ENCODE measurements at regions of chr6 and their contacts with region 1.

Region 1: DNA sequence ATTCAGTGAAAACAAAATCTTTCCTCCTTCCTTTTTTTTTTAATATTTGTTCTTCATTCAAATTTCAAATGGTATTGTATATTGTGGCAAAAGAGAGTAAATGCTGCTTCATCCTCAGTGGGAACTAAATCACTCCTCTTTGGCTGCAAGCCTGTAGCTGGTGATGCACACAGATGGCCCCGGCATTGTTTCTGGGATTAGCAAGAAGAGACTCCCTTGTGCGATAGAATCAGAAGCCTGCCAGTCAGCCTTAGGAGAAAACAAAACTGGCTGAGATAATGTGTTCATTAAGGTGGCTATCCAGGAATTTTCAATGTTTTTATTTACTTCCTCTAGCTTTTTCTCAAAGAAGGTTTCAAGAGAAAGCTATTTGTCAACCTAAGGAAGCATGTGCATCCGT is 20.7 kb upstream of the ELOVL2 start:
- DNase-seq: peak in 5 of 10 donors; percentile 21 to 71 (median 64)
- H3K4me3 ChIP-seq: peak overlapping the region in 2 of 59 donors; percentile 4 to 7
- H3K27ac ChIP-seq: peak overlapping the region in 5 of 59 donors; percentile 2 to 51 (median 33)
- H3K27me3 ChIP-seq: no peaks in the 10 kb centered on the region
- CTCF ChIP-seq: peak in 4 of 56 donors; percentile 12 to 31 (median 24)

Region 2: DNA sequence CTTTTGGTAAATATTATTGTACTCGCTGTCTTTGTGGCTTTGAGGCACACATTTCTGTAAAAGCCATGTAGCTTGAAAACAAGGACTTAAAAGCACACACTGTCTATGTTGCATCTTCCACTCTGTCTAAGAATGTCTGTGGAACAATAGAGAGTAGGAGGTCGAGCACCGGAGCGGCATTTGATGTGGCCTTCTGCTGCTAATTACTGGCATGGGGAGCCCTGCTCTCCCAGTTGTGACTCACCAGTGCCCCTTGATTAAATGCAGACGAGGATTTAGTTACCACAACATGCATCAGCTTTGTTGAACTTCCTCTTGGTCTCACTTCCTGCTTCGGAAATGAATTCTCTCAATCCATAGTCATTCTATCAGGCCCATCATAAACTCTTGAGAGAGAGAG is 1948.8 kb before region 1 on chr6:
- intact Hi-C with region 1: no loop called
- DNase-seq: no peak
- H3K4me3 ChIP-seq: no peak overlapping the region
- H3K27ac ChIP-seq: no peak overlapping the region
- H3K27me3 ChIP-seq: peaks cover 0 to 5% (median 0%) of the 10 kb centered on the region in 45 donors
- CTCF ChIP-seq: no peak

Region 3: DNA sequence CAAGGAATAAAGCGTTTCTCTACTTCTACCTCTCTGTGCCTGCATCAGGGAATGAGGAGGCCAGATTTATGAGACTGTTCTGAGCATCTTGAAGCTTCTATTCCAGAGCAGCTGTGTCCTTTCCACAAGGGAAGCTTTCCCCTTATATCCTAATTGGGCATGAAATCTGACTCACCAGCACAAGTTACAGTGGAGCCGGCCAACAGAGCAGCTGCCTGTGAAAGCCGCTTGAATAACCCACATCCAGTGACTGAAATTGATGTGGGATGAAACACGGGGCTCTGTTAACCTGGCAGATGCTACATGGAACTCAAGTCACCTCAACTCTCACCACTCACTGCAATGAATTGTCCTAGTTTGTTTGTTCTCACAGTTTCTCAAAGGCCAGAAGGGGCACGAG is 1050.3 kb before region 1 on chr6:
- intact Hi-C with region 1: no loop called
- DNase-seq: peak in 8 of 10 donors; percentile 6 to 79 (median 58)
- H3K4me3 ChIP-seq: no peak overlapping the region
- H3K27ac ChIP-seq: peak overlapping the region in 1 of 59 donors; percentile 56
- H3K27me3 ChIP-seq: peaks cover 0 to 11% (median 0%) of the 10 kb centered on the region in 45 donors
- CTCF ChIP-seq: no peak

Region 4: DNA sequence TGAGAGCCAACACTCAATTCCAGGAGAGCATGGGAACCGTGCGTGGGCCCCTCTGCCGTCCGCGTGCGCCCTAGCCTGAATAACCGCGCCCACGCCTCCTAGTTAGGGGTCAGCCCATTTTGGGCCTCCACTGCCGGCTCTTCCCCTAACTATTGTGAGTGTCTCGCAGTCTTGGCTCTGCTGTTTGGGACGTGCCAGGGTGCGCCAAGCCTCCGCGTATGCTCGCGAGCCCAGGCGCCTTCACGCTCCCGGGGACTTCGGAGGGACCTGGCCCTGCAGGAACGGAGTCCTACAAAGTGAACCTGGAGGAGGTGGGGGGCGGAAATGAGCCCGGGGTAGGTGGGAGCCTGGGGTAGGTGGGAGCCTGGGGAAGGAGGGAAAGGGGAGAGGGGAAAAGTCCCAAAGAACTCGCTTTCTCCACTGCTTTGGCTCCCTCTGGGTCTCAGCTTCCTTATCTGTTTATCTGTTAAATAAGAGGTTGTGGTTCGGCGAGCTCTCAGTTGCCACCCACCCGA is 182.1 kb before region 1 on chr6:
- intact Hi-C with region 1: no loop called
- DNase-seq: no peak
- H3K4me3 ChIP-seq: no peak overlapping the region
- H3K27ac ChIP-seq: no peak overlapping the region
- H3K27me3 ChIP-seq: peaks cover 3 to 90% (median 63%) of the 10 kb centered on the region in 45 donors
- CTCF ChIP-seq: no peak

Region 5: GRCh38 chr6:10954590-10955010 is 110.2 kb before region 1 on chr6:
- intact Hi-C with region 1: loop called (anchors 2 to 5 kb)
- DNase-seq: peak in 9 of 10 donors; percentile 37 to 71 (median 51)
- H3K4me3 ChIP-seq: no peak overlapping the region
- H3K27ac ChIP-seq: no peak overlapping the region
- H3K27me3 ChIP-seq: no peaks in the 10 kb centered on the region
- CTCF ChIP-seq: peak in 55 of 56 donors; percentile 36 to 79 (median 65)

Measured in dorsolateral prefrontal cortex (tissue), 120 donors.